ENCODE measurements at regions of chr10 and their contacts with region 1.

Region 1: DNA sequence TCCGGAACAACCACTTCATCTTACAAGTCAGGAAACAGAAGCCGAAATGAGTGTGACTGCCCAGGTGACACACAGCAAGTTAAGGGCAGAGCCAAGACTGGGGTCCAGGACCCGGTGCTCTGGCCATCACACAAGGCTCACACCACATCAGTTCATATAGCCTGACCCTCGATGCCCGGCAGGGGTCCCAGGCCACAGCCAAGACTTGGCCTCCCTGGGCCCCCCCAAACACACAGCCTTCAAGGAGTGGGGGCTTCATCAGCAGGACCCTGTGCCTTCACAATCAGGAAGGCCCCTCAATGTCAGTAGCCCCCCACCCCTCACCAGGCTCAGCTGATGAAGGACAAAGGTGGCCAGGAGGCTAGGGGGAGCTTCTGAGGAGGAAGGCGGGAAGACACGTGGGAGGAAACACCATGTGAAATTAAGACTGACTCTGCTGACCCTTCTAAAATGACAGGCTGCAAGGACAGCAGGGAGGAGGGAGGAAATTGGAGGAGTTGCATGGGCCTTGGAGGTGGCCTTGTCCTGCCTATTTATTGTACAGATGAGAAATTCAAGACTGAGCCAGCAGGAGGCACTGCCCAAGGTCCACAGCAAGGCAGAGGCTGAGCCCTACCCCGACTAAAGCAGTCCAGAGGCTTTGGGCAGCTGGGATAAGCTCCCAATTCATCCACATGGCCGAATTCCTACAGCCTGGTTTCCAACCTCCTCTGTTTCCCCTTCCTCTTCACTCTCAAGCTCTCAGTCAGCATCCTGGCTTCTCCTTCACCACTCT is 216.1 kb upstream of the ZMIZ1 start:
- DNase-seq: peak in 6 of 7 donors; percentile 45 to 71 (median 58)
- H3K4me3 ChIP-seq: no peak overlapping the region
- H3K27ac ChIP-seq: no peak overlapping the region
- H3K4me1 ChIP-seq: peaks cover 4 to 10% of the 10 kb centered on the region in 2 donors
- H3K27me3 ChIP-seq: no peaks in the 10 kb centered on the region
- CTCF ChIP-seq: peak in 5 of 6 experiments; percentile 38 to 57 (median 49)
- POLR2A ChIP-seq: no peak

Region 2: GRCh38 chr10:78331391-78331922 is 521.2 kb before region 1 on chr10:
- intact Hi-C with region 1: no loop called
- DNase-seq: peak in 2 of 7 donors; percentile 8 to 13
- H3K4me3 ChIP-seq: no peak overlapping the region
- H3K27ac ChIP-seq: no peak overlapping the region
- H3K4me1 ChIP-seq: peaks cover 0 to 9% of the 10 kb centered on the region in 2 donors
- H3K27me3 ChIP-seq: no peaks in the 10 kb centered on the region
- CTCF ChIP-seq: no peak
- POLR2A ChIP-seq: no peak

Region 3: DNA sequence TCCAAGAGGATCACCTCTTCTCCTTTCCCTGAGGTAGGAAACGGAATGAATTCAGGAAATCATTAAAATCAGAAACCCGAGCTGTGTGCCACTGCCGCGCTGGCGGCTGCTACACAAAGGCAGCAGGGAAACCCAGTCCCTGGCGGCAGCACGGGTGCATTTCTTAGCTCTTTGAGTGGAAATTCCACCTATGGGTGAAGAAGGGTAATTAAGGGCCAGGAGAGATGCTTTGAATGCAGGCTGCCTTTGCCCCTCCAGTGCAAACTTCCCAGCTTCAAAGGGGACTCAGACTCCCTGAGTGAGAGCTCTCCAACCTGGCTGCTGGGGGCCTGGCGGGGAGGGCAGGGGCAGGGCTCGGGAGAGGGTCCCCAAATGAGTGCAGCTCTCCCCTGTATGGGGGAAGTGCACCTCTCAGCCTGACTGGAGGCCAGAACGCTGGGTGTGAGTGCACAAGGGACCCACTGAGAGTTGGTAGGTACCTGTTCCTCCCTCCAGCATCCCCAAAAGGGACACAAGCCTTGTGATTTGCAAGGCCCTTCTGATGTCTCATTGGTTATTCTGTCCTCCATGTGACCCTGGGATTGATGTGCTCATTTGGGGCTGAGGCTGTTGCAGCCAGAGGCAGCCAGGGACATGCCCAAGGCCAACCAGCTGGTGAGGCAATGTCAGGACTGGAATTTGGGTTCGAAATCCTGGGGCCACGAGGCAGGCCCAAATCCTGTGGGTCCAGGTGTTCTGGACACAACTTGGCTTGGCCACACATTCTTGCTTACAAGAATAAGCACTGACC is 199.8 kb after region 1 on chr10:
- intact Hi-C with region 1: loop called in 1 of 2 experiments (anchors 10 kb)
- DNase-seq: peak in 4 of 7 donors; percentile 49 to 72 (median 61)
- H3K4me3 ChIP-seq: no peak overlapping the region
- H3K27ac ChIP-seq: no peak overlapping the region
- H3K4me1 ChIP-seq: peaks cover 5 to 31% of the 10 kb centered on the region in 2 donors
- H3K27me3 ChIP-seq: no peaks in the 10 kb centered on the region
- CTCF ChIP-seq: peak in 4 of 6 experiments; percentile 20 to 49 (median 35)
- POLR2A ChIP-seq: no peak

Measured in adrenal gland (tissue), 19 donors.